ENCODE measurements at regions of chr12 and their contacts with region 1.

Region 1: DNA sequence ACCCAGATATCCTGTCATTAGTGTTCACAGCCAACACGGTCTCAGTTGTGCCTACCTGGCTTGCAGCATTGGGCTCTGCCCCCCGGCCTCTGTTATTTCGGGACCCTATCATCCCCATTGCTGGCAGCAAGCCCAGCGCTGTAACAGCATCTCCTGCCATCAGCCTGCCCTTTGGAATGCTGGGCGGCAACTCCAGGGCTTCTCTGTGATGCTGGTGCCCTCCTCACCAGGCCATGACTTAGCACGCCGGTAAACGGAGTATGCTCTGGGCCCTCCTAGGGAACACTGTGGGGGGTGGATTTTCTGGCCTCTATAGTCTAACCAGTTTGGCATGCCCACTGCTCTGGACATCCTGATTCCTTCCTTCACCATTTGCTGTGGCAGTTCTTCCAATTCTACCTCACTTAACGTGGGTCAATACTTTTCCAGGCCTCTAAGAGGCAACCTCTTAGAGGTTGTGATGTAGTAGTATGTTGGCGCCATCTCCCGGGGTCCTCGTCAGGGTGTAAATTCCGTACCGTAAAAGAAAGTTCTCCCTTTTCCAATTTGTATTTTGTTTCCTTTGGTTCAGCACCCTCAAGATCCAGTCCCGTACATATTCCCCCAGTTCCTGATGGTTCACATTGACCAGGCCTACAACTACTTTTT is 80.0 kb downstream of the SINHCAF start:
- DNase-seq: no peak
- ATAC-seq: no peak
- H3K4me3 ChIP-seq: no peak overlapping the region
- H3K27ac ChIP-seq: no peak overlapping the region
- H3K4me1 ChIP-seq: no peaks in the 10 kb centered on the region
- H3K27me3 ChIP-seq: 0 out of 2 replicates have a peak, but pooled peaks cover 2% of the 10 kb centered on the region
- CTCF ChIP-seq: no peak
- POLR2A ChIP-seq: no peak
- RAD21 ChIP-seq: 0 out of 2 replicates have a peak, but pooled peaks have one; percentile 4

Region 2: DNA sequence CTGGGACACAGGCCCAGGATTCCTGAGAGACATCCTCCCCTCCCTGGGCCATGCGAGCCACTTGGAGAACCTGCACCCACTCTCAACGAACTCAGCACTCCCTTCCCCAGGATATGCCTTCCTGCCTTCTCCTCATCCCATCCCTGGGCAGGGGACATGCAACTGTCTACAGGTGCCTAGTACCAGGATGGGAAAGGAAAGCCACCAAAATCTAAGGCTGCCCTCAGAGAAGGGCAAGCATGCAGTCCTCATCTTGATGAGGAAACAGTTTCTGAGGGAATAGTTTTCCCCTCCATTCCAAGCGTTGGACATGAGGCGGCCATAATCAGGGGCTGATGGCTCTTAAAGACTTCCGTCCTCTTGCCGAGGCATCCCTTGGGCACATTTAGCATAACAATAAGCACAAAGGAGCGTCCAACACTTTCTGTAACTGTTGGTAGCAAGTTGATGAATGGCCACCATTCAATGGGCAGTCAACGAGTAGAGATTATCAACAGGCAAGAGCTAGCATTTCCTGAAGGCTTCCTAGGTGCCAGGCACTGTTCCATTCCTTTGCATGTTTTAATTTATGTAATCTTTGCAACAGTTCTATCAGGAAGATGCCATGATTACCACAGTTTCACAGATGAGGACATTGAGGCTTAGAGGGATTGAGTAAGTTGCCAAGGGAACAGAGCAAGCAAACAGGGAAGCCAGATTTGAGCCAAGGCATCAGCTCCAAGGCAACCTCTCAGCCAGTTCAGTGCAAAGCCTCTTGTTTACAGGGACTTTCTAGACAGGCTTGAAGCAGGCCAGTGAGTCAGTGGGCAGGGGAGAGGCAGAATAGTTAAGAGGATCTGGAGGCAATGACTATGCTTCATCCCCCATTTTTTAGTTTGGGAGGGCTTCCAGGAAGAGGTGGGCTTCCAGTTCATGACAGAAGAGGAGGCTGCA is 25.0 kb before region 1 on chr12:
- CTCF ChIA-PET with region 1: no interaction called
- POLR2A ChIA-PET with region 1: no interaction called
- RAD21 ChIA-PET with region 1: no interaction called
- intact Hi-C with region 1: no loop called
- DNase-seq: no peak
- ATAC-seq: no peak
- H3K4me3 ChIP-seq: no peak overlapping the region
- H3K27ac ChIP-seq: no peak overlapping the region
- H3K4me1 ChIP-seq: no peaks in the 10 kb centered on the region
- H3K27me3 ChIP-seq: peaks cover 10% of the 10 kb centered on the region
- CTCF ChIP-seq: no peak
- POLR2A ChIP-seq: no peak
- RAD21 ChIP-seq: no peak

Region 3: GRCh38 chr12:31272607-31273225 is 26.8 kb after region 1 on chr12:
- CTCF ChIA-PET with region 1: interaction called, 24 read pairs
- POLR2A ChIA-PET with region 1: no interaction called
- RAD21 ChIA-PET with region 1: no interaction called
- intact Hi-C with region 1: no loop called
- DNase-seq: no peak
- ATAC-seq: no peak
- H3K4me3 ChIP-seq: no peak overlapping the region
- H3K27ac ChIP-seq: no peak overlapping the region
- H3K4me1 ChIP-seq: no peaks in the 10 kb centered on the region
- H3K27me3 ChIP-seq: no peaks in the 10 kb centered on the region
- CTCF ChIP-seq: no peak
- POLR2A ChIP-seq: no peak
- RAD21 ChIP-seq: no peak